Sigmoid colon (tissue), 7 donors: ENCODE measurements at regions of chr20 and their contacts with region 1.

Region 1: GRCh38 chr20:1894951-1895673 is at the start of gene SIRPA:
- DNase-seq: peak; percentile 88
- H3K4me3 ChIP-seq: peak within 1 kb of the TSS; percentile 72 to 87 (median 76)
- H3K27ac ChIP-seq: peak within 1 kb of the TSS; percentile 93 to 94 (median 94)
- H3K4me1 ChIP-seq: peaks cover 0 to 68% (median 58%) of the 10 kb centered on the region in 4 donors
- H3K27me3 ChIP-seq: no peaks in the 10 kb centered on the region
- CTCF ChIP-seq: no peak
- EP300 ChIP-seq: no peak
- POLR2A ChIP-seq: no peak
- total RNA-seq, gene SIRPA: 16.3 to 25.5 (median 21.5) TPM

Region 2: GRCh38 chr20:1266167-1266973 is 628.7 kb before region 1 on chr20 and contains the start of gene SNPH:
- intact Hi-C with region 1: loop called (anchors 5 kb)
- DNase-seq: peak; percentile 91
- H3K4me3 ChIP-seq: peak within 1 kb of the TSS; percentile 76 to 91 (median 88)
- H3K27ac ChIP-seq: peak within 1 kb of the TSS; percentile 73 to 87 (median 78)
- H3K4me1 ChIP-seq: peaks cover 0 to 22% (median 17%) of the 10 kb centered on the region in 4 donors
- H3K27me3 ChIP-seq: no peaks in the 10 kb centered on the region
- CTCF ChIP-seq: no peak
- EP300 ChIP-seq: no peak
- POLR2A ChIP-seq: no peak
- total RNA-seq, gene SNPH: 6.4 to 21.0 (median 8.9) TPM

Region 3: GRCh38 chr20:1802385-1803060 is 92.6 kb before region 1 on chr20:
- intact Hi-C with region 1: loop called (anchors 2 kb)
- DNase-seq: peak; percentile 80
- H3K4me3 ChIP-seq: peak overlapping the region; percentile 20 to 71 (median 54)
- H3K27ac ChIP-seq: peak overlapping the region; percentile 60 to 80 (median 68)
- H3K4me1 ChIP-seq: peaks cover 0 to 23% (median 19%) of the 10 kb centered on the region in 4 donors
- H3K27me3 ChIP-seq: no peaks in the 10 kb centered on the region
- CTCF ChIP-seq: peak; percentile 53 to 72 (median 65)
- EP300 ChIP-seq: no peak
- POLR2A ChIP-seq: no peak

Region 4: DNA sequence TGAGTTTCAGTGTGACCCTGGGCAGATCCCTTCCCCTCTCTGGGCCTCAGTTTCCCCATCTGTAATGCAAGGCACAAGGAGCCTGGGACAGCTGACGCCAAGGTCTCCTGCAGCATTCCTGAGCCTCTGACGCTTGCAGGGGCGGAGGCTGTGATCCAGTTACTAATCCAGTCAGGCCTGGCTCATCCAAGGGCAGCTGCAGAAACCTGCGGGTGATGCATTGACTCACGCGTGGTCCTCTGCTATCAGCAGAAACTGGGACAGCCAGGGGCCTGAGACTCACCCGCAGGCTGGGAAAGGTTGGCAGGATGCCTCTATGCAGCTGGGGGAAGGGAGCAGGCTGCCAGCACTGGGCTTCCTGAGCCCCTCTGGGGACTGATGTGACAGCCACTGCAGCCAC is 64.9 kb before region 1 on chr20:
- intact Hi-C with region 1: no loop called
- DNase-seq: no peak
- H3K4me3 ChIP-seq: no peak overlapping the region
- H3K27ac ChIP-seq: no peak overlapping the region
- H3K4me1 ChIP-seq: peaks cover 0 to 20% (median 16%) of the 10 kb centered on the region in 4 donors
- H3K27me3 ChIP-seq: no peaks in the 10 kb centered on the region
- CTCF ChIP-seq: no peak
- EP300 ChIP-seq: no peak
- POLR2A ChIP-seq: no peak

Region 5: DNA sequence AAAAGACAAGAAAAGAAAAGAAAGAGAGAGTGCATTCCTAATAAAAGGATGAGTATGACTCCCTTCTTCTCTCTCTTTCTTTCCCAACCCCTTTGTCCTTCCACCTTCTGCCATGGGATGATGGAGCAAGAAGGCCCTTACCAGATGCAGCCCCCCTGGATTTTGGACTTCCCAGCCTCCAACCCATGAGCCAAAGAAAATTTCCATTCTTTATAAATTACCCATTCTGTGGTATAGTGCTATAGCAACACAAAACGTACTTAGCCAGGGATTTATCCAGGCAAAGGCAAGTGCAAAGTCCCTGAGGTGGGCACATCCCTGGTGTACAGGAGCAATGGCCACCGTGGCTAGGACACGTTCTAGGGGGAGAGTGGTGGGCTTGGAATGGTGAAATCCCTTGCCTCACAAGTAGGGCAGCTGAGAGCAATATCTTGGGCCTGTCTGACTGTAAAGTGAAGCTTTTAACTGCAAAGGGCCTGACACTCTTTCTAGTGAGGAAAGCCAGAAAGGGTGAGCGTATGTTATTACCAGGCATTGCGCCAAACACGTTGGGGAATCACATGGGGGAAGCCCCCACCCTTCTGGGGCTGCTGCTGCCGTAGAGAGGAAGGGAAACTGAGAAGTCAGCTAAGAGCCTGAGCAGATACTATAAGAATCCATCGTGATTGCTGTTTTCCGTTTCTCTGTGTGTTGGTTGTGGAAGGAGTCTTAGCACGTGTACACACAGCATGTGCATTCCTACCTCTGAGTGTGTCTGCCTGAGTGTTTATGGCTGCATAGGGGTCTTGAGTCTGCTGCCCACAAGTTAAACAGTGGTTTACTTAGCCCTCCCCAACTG is 50.6 kb before region 1 on chr20:
- intact Hi-C with region 1: loop called (anchors 2 kb)
- DNase-seq: peak; percentile 94
- H3K4me3 ChIP-seq: no peak overlapping the region
- H3K27ac ChIP-seq: peak overlapping the region; percentile 28 to 89 (median 81)
- H3K4me1 ChIP-seq: peaks cover 0 to 62% (median 52%) of the 10 kb centered on the region in 4 donors
- H3K27me3 ChIP-seq: no peaks in the 10 kb centered on the region
- CTCF ChIP-seq: peak in 2 of 4 experiments; percentile 6 to 10
- EP300 ChIP-seq: peak; percentile 59 to 88 (median 80)
- POLR2A ChIP-seq: no peak

Region 6: DNA sequence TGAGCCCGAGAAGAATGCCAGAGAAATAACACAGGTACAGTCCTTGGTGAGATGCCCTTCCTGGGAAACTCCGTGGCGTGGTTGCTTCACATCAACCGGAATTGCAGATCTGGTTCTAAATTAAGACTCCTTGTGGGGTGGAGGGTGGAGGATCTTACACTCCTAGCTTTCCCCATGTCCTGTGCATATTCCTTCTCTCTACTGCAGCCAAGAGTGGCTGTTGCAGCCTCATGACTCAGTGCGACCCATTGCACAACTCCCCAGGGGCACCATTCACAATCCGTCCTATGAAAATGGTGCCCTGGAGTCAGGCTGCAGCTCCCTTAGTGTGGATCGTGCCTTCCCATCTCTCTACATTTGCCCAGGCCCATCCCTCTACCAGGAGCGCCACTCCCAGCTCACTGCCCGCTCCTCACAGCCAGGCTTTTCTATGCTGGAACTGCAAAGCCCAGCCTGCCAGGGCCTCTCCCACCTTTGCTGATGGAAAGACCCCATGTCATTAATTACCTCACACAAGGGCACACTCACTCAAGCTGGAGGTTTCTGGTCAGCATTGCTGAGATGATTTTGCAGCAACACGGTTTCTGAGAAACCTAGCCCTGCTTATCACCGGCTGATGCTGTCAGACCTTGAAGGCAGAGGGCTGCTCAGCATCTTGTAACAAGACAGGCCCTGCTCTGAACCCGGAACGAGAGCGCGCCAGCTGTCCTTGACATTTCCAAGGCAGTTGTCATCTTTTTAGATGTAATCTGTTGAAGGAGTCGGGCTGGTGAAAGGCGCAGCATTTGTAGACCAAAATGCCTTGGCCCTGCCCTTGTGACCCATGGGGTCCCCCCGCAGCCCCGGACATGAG is 39.8 kb after region 1 on chr20:
- intact Hi-C with region 1: loop called (anchors 2 kb)
- DNase-seq: peak; percentile 92
- H3K4me3 ChIP-seq: no peak overlapping the region
- H3K27ac ChIP-seq: peak overlapping the region; percentile 60 to 79 (median 64)
- H3K4me1 ChIP-seq: peaks cover 0 to 35% (median 28%) of the 10 kb centered on the region in 4 donors
- H3K27me3 ChIP-seq: no peaks in the 10 kb centered on the region
- CTCF ChIP-seq: no peak
- EP300 ChIP-seq: peak in 1 of 4 donors; percentile 17
- POLR2A ChIP-seq: no peak

Region 7: GRCh38 chr20:2873010-2873746 is 978.1 kb after region 1 on chr20 and contains the start of gene PTPRA:
- intact Hi-C with region 1: loop called (anchors 10 kb)
- DNase-seq: peak; percentile 95
- H3K4me3 ChIP-seq: peak within 1 kb of the TSS; percentile 88 to 98 (median 94)
- H3K27ac ChIP-seq: peak within 1 kb of the TSS; percentile 78 to 91 (median 86)
- H3K4me1 ChIP-seq: peaks cover 0 to 44% (median 31%) of the 10 kb centered on the region in 4 donors
- H3K27me3 ChIP-seq: peaks cover 0 to 14% (median 0%) of the 10 kb centered on the region in 3 donors
- CTCF ChIP-seq: no peak
- EP300 ChIP-seq: no peak
- POLR2A ChIP-seq: peak; percentile 49
- total RNA-seq, gene PTPRA: 62.0 to 86.4 (median 73.6) TPM